A673 (cell line): ENCODE measurements at regions of chr10 and their contacts with region 1.

Region 1: GRCh38 chr10:20207653-20208052 is 391.4 kb downstream of the PLXDC2 start:
- DNase-seq: no peak
- H3K4me3 ChIP-seq: no peak overlapping the region
- H3K27ac ChIP-seq: no peak overlapping the region
- H3K4me1 ChIP-seq: no peaks in the 10 kb centered on the region
- H3K27me3 ChIP-seq: no peaks in the 10 kb centered on the region
- CTCF ChIP-seq: no peak

Region 2: GRCh38 chr10:20417791-20418190 is 210.1 kb after region 1 on chr10:
- CTCF ChIA-PET with region 1: no interaction called
- POLR2A ChIA-PET with region 1: interaction called, 19 read pairs
- intact Hi-C with region 1: no loop called
- DNase-seq: no peak
- H3K4me3 ChIP-seq: no peak overlapping the region
- H3K27ac ChIP-seq: no peak overlapping the region
- H3K4me1 ChIP-seq: no peaks in the 10 kb centered on the region
- H3K27me3 ChIP-seq: no peaks in the 10 kb centered on the region
- CTCF ChIP-seq: no peak